ENCODE measurements at regions of chr14 and their contacts with region 1.

Region 1: DNA sequence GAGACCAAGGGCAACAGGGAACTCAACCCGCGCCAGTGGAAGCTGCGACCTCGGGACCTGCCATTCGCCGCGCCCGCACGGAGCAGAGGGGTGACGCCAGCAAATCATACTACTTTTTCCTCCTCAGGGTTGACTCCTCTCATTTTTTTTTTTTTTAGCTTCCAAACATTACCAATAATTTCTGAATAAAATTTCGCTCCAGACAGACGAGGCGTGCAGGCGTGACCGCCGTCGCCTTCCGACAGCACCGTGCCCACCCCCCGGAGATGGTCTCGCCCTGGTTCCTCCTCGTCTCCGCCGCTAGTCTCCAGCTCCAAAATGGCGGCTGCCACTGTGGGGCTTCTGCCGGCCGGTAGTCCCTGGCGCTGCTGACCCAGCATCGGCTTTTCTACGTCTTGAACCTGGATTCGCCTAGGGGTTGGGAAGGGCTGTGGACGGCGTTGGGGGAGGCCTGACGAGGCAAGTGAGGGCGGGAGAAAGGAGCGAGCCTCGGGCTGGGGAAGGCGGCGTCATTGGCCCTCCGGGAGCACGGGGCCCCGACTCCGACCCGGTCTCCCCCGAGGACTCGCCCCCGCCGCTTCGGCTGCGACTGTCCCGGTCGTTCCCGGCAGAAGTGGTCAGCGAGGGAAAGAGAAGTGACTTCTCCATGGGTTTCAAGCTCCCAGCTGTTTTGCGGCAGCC is at the starts of genes CPSF2 and NDUFB1:
- DNase-seq: peak; percentile 78
- ATAC-seq: peak; percentile 92
- H3K4me3 Mint-ChIP-seq: peak within 1 kb of the TSS; percentile 100
- H3K27ac Mint-ChIP-seq: peak within 1 kb of the TSS; percentile 100
- H3K4me1 Mint-ChIP-seq: peaks cover 35% of the 10 kb centered on the region
- H3K27me3 Mint-ChIP-seq: no peaks in the 10 kb centered on the region
- CTCF ChIP-seq: no peak
- total RNA-seq, gene CPSF2: 46.9 and 53.2 TPM in 2 replicates
- total RNA-seq, gene NDUFB1: 88.2 and 94.2 TPM in 2 replicates

Region 2: GRCh38 chr14:92768795-92769194 is 647.0 kb after region 1 on chr14:
- CTCF ChIA-PET with region 1: no interaction called
- POLR2A ChIA-PET with region 1: interaction called, 13 read pairs
- intact Hi-C with region 1: no loop called
- DNase-seq: no peak
- ATAC-seq: no peak
- H3K4me3 Mint-ChIP-seq: peak overlapping the region; percentile 55
- H3K27ac Mint-ChIP-seq: peak overlapping the region; percentile 84
- H3K4me1 Mint-ChIP-seq: peaks cover 50% of the 10 kb centered on the region
- H3K27me3 Mint-ChIP-seq: no peaks in the 10 kb centered on the region
- CTCF ChIP-seq: no peak